PC-9 (cell line): ENCODE measurements at regions of chr7 and their contacts with region 1.

Region 1: GRCh38 chr7:99997545-99998137 is 17.8 kb upstream of the ZKSCAN1 start:
- DNase-seq: no peak
- H3K4me3 ChIP-seq: no peak overlapping the region
- H3K27ac ChIP-seq: no peak overlapping the region
- H3K4me1 ChIP-seq: 0 out of 2 replicates have a peak, but pooled peaks cover 3% of the 10 kb centered on the region
- H3K27me3 ChIP-seq: peaks cover 44% of the 10 kb centered on the region
- CTCF ChIP-seq: no peak

Region 2: DNA sequence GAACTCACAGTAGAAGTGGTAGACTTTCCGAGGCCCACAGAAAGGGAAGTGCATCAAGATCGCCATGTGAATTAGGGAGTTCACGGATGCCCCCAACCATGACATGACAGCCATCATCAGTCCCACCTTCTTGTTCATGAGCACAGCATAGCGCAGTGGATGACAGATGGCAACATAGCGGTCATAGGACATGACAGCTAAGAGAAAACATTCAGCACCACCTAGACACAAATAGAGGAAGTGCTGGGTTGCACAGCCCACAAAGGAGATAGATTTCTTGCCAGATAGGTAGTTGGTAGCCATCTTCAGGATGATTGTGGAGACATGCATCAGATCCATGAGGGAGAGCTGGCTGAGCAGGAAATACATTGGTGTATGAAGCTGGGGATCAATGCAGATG is 121.2 kb before region 1 on chr7:
- CTCF ChIA-PET with region 1: interaction called, 18 read pairs
- POLR2A ChIA-PET with region 1: no interaction called
- intact Hi-C with region 1: no loop called
- DNase-seq: no peak
- H3K4me3 ChIP-seq: no peak overlapping the region
- H3K27ac ChIP-seq: no peak overlapping the region
- H3K4me1 ChIP-seq: no peaks in the 10 kb centered on the region
- H3K27me3 ChIP-seq: no peaks in the 10 kb centered on the region
- CTCF ChIP-seq: no peak

Region 3: GRCh38 chr7:100034871-100035510 is 37.4 kb after region 1 on chr7:
- CTCF ChIA-PET with region 1: interaction called, 23 read pairs
- POLR2A ChIA-PET with region 1: no interaction called
- intact Hi-C with region 1: no loop called
- DNase-seq: no peak
- H3K4me3 ChIP-seq: no peak overlapping the region
- H3K27ac ChIP-seq: no peak overlapping the region
- H3K4me1 ChIP-seq: no peaks in the 10 kb centered on the region
- H3K27me3 ChIP-seq: no peaks in the 10 kb centered on the region
- CTCF ChIP-seq: no peak

Region 4: DNA sequence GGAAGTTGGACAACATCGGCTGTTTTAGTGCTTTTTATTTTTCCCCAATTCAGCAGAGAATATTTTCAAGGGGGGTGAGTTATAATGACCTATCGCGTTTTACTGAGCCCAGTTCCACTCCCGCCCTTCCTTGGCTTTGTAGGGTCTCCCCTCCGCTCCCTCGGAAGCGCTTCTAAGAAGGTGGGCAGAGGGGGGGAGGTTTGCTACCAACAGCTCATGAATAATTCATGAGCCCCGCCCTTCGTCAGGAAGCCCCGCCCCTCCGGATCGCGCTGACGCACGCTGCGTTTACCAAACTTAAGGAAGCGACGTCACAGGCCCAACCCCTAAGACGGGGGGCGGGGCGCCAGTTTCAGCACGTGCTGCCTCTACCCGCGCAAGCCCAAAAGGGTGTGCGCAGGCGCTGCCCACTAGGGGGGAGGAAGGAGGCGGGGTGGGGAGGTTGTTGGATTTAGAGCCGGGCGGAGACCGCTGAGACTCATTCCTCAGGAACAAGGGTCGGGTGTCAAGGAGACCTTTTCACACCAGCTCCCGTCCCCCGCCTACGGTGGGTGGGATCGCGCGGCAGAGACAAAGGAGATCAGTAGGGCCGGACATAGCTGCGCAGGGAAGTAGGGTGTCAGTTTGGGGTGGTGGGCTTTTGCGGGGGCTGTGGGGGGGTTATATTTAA is 431.5 kb after region 1 on chr7:
- CTCF ChIA-PET with region 1: no interaction called
- POLR2A ChIA-PET with region 1: no interaction called
- intact Hi-C with region 1: no loop called
- DNase-seq: peak; percentile 97 to 100
- H3K4me3 ChIP-seq: peak overlapping the region; percentile 66
- H3K27ac ChIP-seq: peak overlapping the region; percentile 93
- H3K4me1 ChIP-seq: peaks cover 37% of the 10 kb centered on the region
- H3K27me3 ChIP-seq: no peaks in the 10 kb centered on the region
- CTCF ChIP-seq: no peak; the same call in 1 of the 2 replicates